PC-3 (cell line): ENCODE measurements at regions of chr9 and their contacts with region 1.

Region 1: DNA sequence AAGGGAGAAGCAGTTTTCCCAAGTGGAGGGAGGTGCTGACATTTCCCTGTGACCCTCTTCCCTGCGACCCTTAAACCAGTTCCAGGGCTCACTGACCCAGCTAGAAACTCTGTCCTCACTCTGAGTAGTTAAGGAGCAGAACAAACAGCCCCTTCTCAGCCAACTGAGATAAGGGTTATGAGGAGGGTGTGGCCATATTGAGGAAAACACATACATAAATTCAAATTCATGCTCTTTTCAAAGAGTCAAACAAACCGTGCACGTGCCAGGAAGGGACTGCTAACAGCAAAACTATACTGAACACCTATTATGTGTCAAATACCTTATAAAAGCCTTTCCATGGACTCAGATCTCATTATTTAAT is 4.9 kb upstream of the AKNA start:
- DNase-seq: peak; percentile 31
- ATAC-seq: peak; percentile 70
- H3K4me3 ChIP-seq: no peak overlapping the region
- H3K27ac ChIP-seq: peak overlapping the region; percentile 55
- H3K4me1 ChIP-seq: peaks cover 16% of the 10 kb centered on the region
- H3K27me3 ChIP-seq: no peaks in the 10 kb centered on the region
- CTCF ChIP-seq: no peak

Region 2: GRCh38 chr9:114339130-114339908 is 53.4 kb before region 1 on chr9:
- CTCF ChIA-PET with region 1: no interaction called
- POLR2A ChIA-PET with region 1: no interaction called
- intact Hi-C with region 1: loop called (anchors 1 kb)
- DNase-seq: peak; percentile 65
- ATAC-seq: peak; percentile 93
- H3K4me3 ChIP-seq: no peak overlapping the region
- H3K27ac ChIP-seq: no peak overlapping the region
- H3K4me1 ChIP-seq: no peaks in the 10 kb centered on the region
- H3K27me3 ChIP-seq: no peaks in the 10 kb centered on the region
- CTCF ChIP-seq: peak; percentile 87

Region 3: DNA sequence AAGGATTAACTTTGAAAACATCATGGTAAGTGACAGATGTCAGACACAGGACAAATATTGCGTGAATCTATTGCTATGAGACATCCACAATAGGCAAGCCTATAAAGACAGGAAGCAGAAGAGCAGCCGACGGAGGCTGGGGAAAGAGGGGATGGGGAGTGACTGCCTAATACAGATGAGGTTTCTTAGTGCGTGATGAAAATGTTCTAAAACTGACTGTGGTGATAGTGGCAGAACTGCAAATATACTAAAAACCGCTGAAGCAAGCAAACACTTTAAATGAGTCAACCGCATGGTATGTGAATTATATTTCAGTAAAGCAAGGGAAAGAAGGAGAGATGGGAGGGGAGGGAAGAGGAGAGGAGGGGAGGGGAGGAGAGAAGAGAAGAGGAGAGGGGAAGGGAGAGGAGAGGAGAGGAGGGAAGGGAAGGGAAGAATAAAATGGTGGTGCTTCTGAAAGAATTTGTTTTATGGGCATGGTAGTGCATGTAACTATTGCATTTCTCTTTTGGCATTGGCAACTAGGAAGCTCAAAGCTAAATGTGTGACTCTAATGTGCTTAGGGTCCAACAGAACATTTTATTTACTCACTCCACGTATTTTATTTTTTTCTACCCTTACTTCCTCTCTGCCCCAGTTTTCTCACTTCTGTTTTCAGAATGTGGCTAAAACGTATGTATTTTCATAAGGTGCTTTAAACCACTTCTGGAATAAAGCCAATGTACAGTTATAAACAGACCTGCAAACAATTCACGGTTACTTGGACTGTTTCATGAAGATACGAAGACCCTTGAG is 26.2 kb before region 1 on chr9:
- CTCF ChIA-PET with region 1: no interaction called
- POLR2A ChIA-PET with region 1: no interaction called
- intact Hi-C with region 1: loop called (anchors 2 kb)
- DNase-seq: peak; percentile 87
- ATAC-seq: peak; percentile 95
- H3K4me3 ChIP-seq: no peak overlapping the region; the same call in 1 of the 2 replicates
- H3K27ac ChIP-seq: peak overlapping the region; percentile 86
- H3K4me1 ChIP-seq: peaks cover 49% of the 10 kb centered on the region
- H3K27me3 ChIP-seq: no peaks in the 10 kb centered on the region
- CTCF ChIP-seq: no peak